ENCODE measurements at regions of chr3 and their contacts with region 1.

Region 1: GRCh38 chr3:19866751-19867347 is 67.2 kb downstream of the EFHB start:
- DNase-seq: peak in 1 of 2 donors; percentile 37
- H3K4me3 ChIP-seq: no peak overlapping the region
- H3K27ac ChIP-seq: no peak overlapping the region
- H3K4me1 ChIP-seq: no peaks in the 10 kb centered on the region
- H3K27me3 ChIP-seq: no peaks in the 10 kb centered on the region
- CTCF ChIP-seq: peak; percentile 66 to 77

Region 2: GRCh38 chr3:19065027-19065426 is 801.8 kb before region 1 on chr3:
- intact Hi-C with region 1: loop called (anchors 10 kb)
- DNase-seq: no peak
- H3K4me3 ChIP-seq: no peak overlapping the region
- H3K27ac ChIP-seq: no peak overlapping the region
- H3K4me1 ChIP-seq: no peaks in the 10 kb centered on the region
- H3K27me3 ChIP-seq: no peaks in the 10 kb centered on the region
- CTCF ChIP-seq: peak; percentile 22 to 33

Region 3: DNA sequence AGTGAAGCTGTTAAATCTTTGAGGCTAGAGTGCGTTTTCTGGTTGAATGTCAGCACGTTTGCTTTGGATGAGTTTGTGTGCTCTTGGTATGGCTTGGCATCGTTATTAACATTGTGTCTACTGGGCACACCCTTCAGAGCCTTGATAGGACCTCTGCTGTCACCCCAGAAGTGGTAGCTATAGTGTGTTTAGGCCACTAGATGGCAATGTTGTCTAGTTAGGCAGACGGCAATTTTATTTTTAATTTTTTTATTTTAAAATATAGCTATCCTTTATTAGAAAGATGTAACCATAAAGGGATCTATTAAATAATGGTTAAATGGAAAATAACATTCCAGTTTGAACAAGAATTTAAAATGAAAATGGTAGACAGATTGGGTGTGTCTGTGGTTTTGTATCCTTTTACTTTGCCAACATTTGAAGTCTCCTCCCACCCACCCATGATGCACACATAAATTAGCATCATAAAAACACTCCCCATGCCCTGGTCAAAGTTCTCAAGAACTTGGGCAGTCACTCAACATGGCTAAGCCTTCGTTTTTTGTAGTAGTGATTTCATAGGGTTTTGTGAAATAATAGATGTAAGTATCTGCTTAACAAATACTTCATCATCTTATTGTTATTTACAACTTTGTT is 517.8 kb before region 1 on chr3:
- intact Hi-C with region 1: loop called (anchors 2 kb)
- DNase-seq: no peak
- H3K4me3 ChIP-seq: no peak overlapping the region
- H3K27ac ChIP-seq: no peak overlapping the region
- H3K4me1 ChIP-seq: peaks cover 0 to 11% (median 3%) of the 10 kb centered on the region in 4 donors
- H3K27me3 ChIP-seq: no peaks in the 10 kb centered on the region
- CTCF ChIP-seq: peak; percentile 55 to 85